Lower leg skin (tissue), 4 donors: ENCODE measurements at regions of chr12 and their contacts with region 1.

Region 1: GRCh38 chr12:114384739-114385138 is 21.2 kb downstream of the TBX5 start:
- DNase-seq: no peak
- H3K4me3 ChIP-seq: no peak overlapping the region
- CTCF ChIP-seq: no peak
- POLR2A ChIP-seq: no peak

Region 2: DNA sequence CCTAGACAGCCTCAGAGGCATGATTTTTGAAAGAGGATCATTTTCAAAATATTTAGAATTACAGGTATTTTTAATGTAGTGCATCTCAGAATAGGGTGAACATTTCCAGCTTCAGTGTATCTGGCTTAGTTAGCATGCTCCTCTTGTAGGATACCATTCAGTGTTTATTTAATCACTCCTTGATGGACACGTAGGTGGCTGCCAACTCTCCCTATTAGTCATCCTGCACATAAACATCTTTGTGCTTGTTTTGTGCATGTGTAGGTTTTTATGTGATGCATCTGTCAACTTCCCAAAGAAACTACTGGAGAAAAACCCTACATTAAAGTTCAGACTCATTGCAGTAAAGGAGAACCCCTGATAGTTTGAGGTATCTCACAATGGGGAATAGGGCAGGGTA is 366.1 kb before region 1 on chr12:
- intact Hi-C with region 1: loop called (anchors 5 kb)
- DNase-seq: no peak
- H3K4me3 ChIP-seq: no peak overlapping the region
- CTCF ChIP-seq: no peak
- POLR2A ChIP-seq: no peak

Region 3: GRCh38 chr12:114529966-114530365 is 145.2 kb after region 1 on chr12:
- intact Hi-C with region 1: no loop called
- DNase-seq: no peak
- H3K4me3 ChIP-seq: no peak overlapping the region
- CTCF ChIP-seq: no peak
- POLR2A ChIP-seq: no peak